ENCODE measurements at regions of chr12 and their contacts with region 1.

Region 1: GRCh38 chr12:56189176-56189917 is at the start of gene SMARCC2:
- DNase-seq: peak; percentile 85
- ATAC-seq: peak; percentile 86
- H3K4me3 ChIP-seq: peak within 1 kb of the TSS; percentile 95
- H3K27ac ChIP-seq: peak within 1 kb of the TSS; percentile 93
- H3K4me1 ChIP-seq: peaks cover 7% of the 10 kb centered on the region
- H3K27me3 ChIP-seq: no peaks in the 10 kb centered on the region
- CTCF ChIP-seq: peak; percentile 97
- POLR2A ChIP-seq: no peak
- RAD21 ChIP-seq: peak; percentile 65
- total RNA-seq, gene SMARCC2: 41.4 and 42.3 TPM in 2 replicates

Region 2: DNA sequence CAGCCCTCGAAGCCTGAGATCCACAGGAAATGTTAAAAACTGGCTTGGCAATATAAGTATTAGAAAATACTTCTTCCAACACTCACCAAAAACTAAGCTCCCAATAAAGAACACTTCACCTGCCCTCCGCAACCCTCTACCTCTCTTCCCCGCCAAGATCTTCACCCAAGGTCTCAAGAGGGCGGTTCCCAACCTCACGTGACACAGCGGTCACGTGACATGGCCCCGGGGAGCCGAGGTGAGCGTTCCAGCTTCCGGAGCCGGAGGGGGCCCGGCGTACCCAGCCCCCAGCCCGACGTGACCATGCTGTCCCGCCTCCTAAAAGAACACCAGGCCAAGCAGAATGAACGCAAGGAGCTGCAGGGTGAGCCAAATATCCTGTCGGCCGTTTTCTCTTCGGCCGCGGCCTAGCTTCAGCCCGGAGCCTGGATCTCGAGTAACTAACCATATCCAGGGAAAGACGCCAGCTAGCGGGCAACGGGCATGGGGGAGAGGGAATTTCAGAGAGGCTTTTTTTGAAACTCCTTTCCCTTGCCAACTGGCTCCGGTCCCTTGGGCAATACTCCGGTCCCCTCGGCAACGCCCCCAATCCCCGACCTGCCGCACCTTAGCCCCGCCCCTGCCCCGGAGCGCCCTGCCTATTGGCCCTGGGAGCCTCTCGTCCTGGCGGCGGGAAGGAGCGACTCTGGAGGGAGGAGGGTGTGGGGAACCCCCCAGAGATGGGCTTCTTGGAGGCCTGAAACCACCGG is 473.3 kb before region 1 on chr12 and contains the start of gene BLOC1S1:
- CTCF ChIA-PET with region 1: no interaction called
- POLR2A ChIA-PET with region 1: no interaction called
- dilution Hi-C with region 1: no loop called
- in situ Hi-C with region 1: no loop called
- intact Hi-C with region 1: no loop called
- DNase-seq: peak; percentile 91
- ATAC-seq: peak; percentile 70
- H3K4me3 ChIP-seq: peak within 1 kb of the TSS; percentile 78
- H3K27ac ChIP-seq: peak within 1 kb of the TSS; percentile 84
- H3K4me1 ChIP-seq: peaks cover 40% of the 10 kb centered on the region
- H3K27me3 ChIP-seq: no peaks in the 10 kb centered on the region
- CTCF ChIP-seq: no peak
- POLR2A ChIP-seq: no peak
- RAD21 ChIP-seq: no peak
- total RNA-seq, gene BLOC1S1: 128 and 158 TPM in 2 replicates

Region 3: GRCh38 chr12:55940065-55940732 is 249.1 kb before region 1 on chr12:
- CTCF ChIA-PET with region 1: no interaction called
- POLR2A ChIA-PET with region 1: no interaction called
- dilution Hi-C with region 1: no loop called
- in situ Hi-C with region 1: no loop called
- intact Hi-C with region 1: no loop called
- DNase-seq: peak; percentile 81
- ATAC-seq: peak; percentile 98
- H3K4me3 ChIP-seq: no peak overlapping the region
- H3K27ac ChIP-seq: no peak overlapping the region
- H3K4me1 ChIP-seq: peaks cover 4% of the 10 kb centered on the region
- H3K27me3 ChIP-seq: no peaks in the 10 kb centered on the region
- CTCF ChIP-seq: peak; percentile 90
- POLR2A ChIP-seq: no peak
- RAD21 ChIP-seq: peak; percentile 94

Region 4: GRCh38 chr12:56127888-56128669 is 61.3 kb before region 1 on chr12 and contains the start of gene ESYT1:
- CTCF ChIA-PET with region 1: interaction called, 10 read pairs
- POLR2A ChIA-PET with region 1: no interaction called
- dilution Hi-C with region 1: no loop called
- in situ Hi-C with region 1: loop called (anchors 5 kb)
- intact Hi-C with region 1: loop called (anchors 2 kb)
- DNase-seq: peak; percentile 100
- ATAC-seq: peak; percentile 93
- H3K4me3 ChIP-seq: peak within 1 kb of the TSS; percentile 75
- H3K27ac ChIP-seq: peak within 1 kb of the TSS; percentile 44
- H3K4me1 ChIP-seq: peaks cover 6% of the 10 kb centered on the region; the same call in 1 of the 2 replicates
- H3K27me3 ChIP-seq: no peaks in the 10 kb centered on the region
- CTCF ChIP-seq: no peak
- POLR2A ChIP-seq: peak; percentile 71; the same call in 1 of the 2 replicates
- RAD21 ChIP-seq: no peak
- total RNA-seq, gene ESYT1: 137 and 150 TPM in 2 replicates

Region 5: GRCh38 chr12:56224102-56224701 is 34.9 kb after region 1 on chr12 and contains the start of gene NABP2:
- CTCF ChIA-PET with region 1: interaction called, 22 read pairs
- POLR2A ChIA-PET with region 1: interaction called, 5 read pairs
- dilution Hi-C with region 1: no loop called
- in situ Hi-C with region 1: no loop called
- intact Hi-C with region 1: loop called (anchors 1 kb)
- DNase-seq: peak; percentile 96
- ATAC-seq: peak; percentile 76
- H3K4me3 ChIP-seq: peak within 1 kb of the TSS; percentile 63
- H3K27ac ChIP-seq: peak within 1 kb of the TSS; percentile 73
- H3K4me1 ChIP-seq: peaks cover 4% of the 10 kb centered on the region; the same call in 1 of the 2 replicates
- H3K27me3 ChIP-seq: no peaks in the 10 kb centered on the region
- CTCF ChIP-seq: peak; percentile 74
- POLR2A ChIP-seq: no peak
- RAD21 ChIP-seq: no peak; the same call in none of the 2 replicates
- total RNA-seq, gene NABP2: 29.2 and 31.4 TPM in 2 replicates

Region 6: GRCh38 chr12:56258057-56258819 is 68.9 kb after region 1 on chr12 and contains the start of gene ANKRD52:
- CTCF ChIA-PET with region 1: interaction called, 3 read pairs
- POLR2A ChIA-PET with region 1: no interaction called
- dilution Hi-C with region 1: no loop called
- in situ Hi-C with region 1: no loop called
- intact Hi-C with region 1: loop called (anchors 1 kb)
- DNase-seq: peak; percentile 71
- ATAC-seq: peak; percentile 86
- H3K4me3 ChIP-seq: peak within 1 kb of the TSS; percentile 94
- H3K27ac ChIP-seq: peak within 1 kb of the TSS; percentile 94
- H3K4me1 ChIP-seq: peaks cover 22% of the 10 kb centered on the region
- H3K27me3 ChIP-seq: no peaks in the 10 kb centered on the region
- CTCF ChIP-seq: peak; percentile 82
- POLR2A ChIP-seq: no peak
- RAD21 ChIP-seq: peak; percentile 34
- total RNA-seq, gene ANKRD52: 15.4 and 16.1 TPM in 2 replicates

Region 7: GRCh38 chr12:56299853-56300643 is 110.7 kb after region 1 on chr12 and contains the start of gene CS:
- CTCF ChIA-PET with region 1: no interaction called
- POLR2A ChIA-PET with region 1: no interaction called
- dilution Hi-C with region 1: no loop called
- in situ Hi-C with region 1: no loop called
- intact Hi-C with region 1: loop called (anchors 1 kb)
- DNase-seq: peak; percentile 95
- ATAC-seq: peak; percentile 99
- H3K4me3 ChIP-seq: peak within 1 kb of the TSS; percentile 85
- H3K27ac ChIP-seq: peak within 1 kb of the TSS; percentile 85
- H3K4me1 ChIP-seq: peaks cover 9% of the 10 kb centered on the region; the same call in 1 of the 2 replicates
- H3K27me3 ChIP-seq: no peaks in the 10 kb centered on the region
- CTCF ChIP-seq: no peak
- POLR2A ChIP-seq: peak; percentile 47
- RAD21 ChIP-seq: no peak
- total RNA-seq, gene CS: 90.5 and 139 TPM in 2 replicates

Region 8: GRCh38 chr12:56468216-56469006 is 279.1 kb after region 1 on chr12 and contains the start of gene SPRYD4:
- CTCF ChIA-PET with region 1: interaction called, 3 read pairs
- POLR2A ChIA-PET with region 1: no interaction called
- dilution Hi-C with region 1: no loop called
- in situ Hi-C with region 1: no loop called
- intact Hi-C with region 1: loop called (anchors 2 kb)
- DNase-seq: peak; percentile 90
- ATAC-seq: peak; percentile 93
- H3K4me3 ChIP-seq: peak within 1 kb of the TSS; percentile 84
- H3K27ac ChIP-seq: peak within 1 kb of the TSS; percentile 64
- H3K4me1 ChIP-seq: peaks cover 4% of the 10 kb centered on the region
- H3K27me3 ChIP-seq: no peaks in the 10 kb centered on the region
- CTCF ChIP-seq: peak; percentile 36
- POLR2A ChIP-seq: peak; percentile 85
- RAD21 ChIP-seq: no peak
- total RNA-seq, gene SPRYD4: 1.4 and 1.8 TPM in 2 replicates

Region 9: DNA sequence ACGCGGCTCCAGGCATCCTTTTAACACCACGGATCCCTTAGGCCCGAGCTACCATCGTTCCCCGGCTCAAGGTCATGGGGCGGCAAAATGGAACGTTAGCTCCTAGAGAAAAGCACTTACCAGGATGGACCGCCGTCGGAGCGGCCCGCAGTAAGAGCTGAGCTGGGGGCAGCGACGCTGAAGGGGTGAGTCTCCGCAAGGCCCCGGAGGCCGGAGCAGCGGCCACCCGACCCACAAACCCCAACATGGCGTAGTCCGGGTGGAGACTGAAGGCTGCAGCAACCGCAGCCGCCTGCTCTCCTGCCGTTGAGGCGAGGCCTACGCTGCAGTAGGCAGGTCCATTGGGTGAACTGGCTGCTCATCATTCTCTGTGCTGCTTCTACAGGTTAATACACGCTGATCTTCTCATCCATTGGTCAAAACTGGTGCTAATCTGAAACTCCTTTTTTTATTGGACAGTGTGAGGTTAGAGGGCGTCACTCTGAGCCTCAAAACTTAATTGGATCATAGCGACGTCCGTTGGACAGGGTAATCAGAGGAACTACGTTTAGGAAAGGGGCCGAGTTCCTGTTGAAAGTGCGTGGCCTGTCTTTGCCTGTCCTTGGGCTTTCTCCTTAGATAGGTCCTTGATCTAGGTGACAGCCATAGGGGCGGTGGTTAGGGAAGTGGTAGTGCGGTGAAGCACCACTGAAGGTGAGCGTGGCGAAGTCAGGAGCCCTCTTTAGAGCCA is 456.5 kb after region 1 on chr12 and contains the start of gene ATP5F1B:
- CTCF ChIA-PET with region 1: no interaction called
- POLR2A ChIA-PET with region 1: no interaction called
- dilution Hi-C with region 1: no loop called
- in situ Hi-C with region 1: no loop called
- intact Hi-C with region 1: no loop called
- DNase-seq: peak; percentile 100
- ATAC-seq: peak; percentile 99
- H3K4me3 ChIP-seq: peak within 1 kb of the TSS; percentile 74
- H3K27ac ChIP-seq: peak within 1 kb of the TSS; percentile 82
- H3K4me1 ChIP-seq: no peaks in the 10 kb centered on the region
- H3K27me3 ChIP-seq: no peaks in the 10 kb centered on the region
- CTCF ChIP-seq: no peak
- POLR2A ChIP-seq: peak; percentile 98
- RAD21 ChIP-seq: no peak
- total RNA-seq, gene ATP5F1B: 795 and 812 TPM in 2 replicates

Region 10: DNA sequence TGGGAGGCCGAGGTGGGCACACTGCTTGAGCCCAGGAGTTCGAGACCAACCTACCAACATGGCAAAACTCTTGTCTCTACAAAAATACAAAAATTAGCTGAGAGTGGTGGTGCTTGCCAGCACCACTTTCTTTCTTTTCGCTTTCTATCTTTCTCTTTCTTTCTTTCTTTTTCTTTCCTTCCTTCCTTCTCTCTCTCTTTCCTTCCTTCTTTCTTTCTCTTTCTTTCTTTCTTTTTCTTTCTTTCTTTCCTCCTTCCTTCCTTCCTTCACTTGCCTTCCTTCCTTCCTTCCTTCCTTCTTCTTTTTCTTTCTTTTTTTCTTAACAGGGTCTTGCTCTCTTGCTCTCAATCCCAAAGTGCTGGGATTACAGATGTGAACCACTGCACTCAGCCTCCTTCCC is 640.6 kb after region 1 on chr12:
- CTCF ChIA-PET with region 1: no interaction called
- POLR2A ChIA-PET with region 1: no interaction called
- dilution Hi-C with region 1: no loop called
- in situ Hi-C with region 1: no loop called
- intact Hi-C with region 1: no loop called
- DNase-seq: no peak
- ATAC-seq: no peak
- H3K4me3 ChIP-seq: no peak overlapping the region
- H3K27ac ChIP-seq: no peak overlapping the region
- H3K4me1 ChIP-seq: no peaks in the 10 kb centered on the region
- H3K27me3 ChIP-seq: peaks cover 6% of the 10 kb centered on the region
- CTCF ChIP-seq: no peak
- POLR2A ChIP-seq: no peak
- RAD21 ChIP-seq: no peak